Activated CD4-positive, alpha-beta T cell treated with anti-CD3 and anti-CD28 coated beads for 36 hours (primary cell): ENCODE measurements at regions of chr2 and their contacts with region 1.

Region 1: GRCh38 chr2:203014456-203015199 is at the start of gene NBEAL1:
- DNase-seq: peak; percentile 98
- ATAC-seq: peak; percentile 96
- H3K4me3 Mint-ChIP-seq: peak within 1 kb of the TSS; percentile 93
- H3K27ac Mint-ChIP-seq: peak within 1 kb of the TSS; percentile 89
- H3K4me1 Mint-ChIP-seq: peaks cover 32% of the 10 kb centered on the region
- H3K27me3 Mint-ChIP-seq: no peaks in the 10 kb centered on the region
- total RNA-seq, gene NBEAL1: 8.2 to 13.0 TPM

Region 2: DNA sequence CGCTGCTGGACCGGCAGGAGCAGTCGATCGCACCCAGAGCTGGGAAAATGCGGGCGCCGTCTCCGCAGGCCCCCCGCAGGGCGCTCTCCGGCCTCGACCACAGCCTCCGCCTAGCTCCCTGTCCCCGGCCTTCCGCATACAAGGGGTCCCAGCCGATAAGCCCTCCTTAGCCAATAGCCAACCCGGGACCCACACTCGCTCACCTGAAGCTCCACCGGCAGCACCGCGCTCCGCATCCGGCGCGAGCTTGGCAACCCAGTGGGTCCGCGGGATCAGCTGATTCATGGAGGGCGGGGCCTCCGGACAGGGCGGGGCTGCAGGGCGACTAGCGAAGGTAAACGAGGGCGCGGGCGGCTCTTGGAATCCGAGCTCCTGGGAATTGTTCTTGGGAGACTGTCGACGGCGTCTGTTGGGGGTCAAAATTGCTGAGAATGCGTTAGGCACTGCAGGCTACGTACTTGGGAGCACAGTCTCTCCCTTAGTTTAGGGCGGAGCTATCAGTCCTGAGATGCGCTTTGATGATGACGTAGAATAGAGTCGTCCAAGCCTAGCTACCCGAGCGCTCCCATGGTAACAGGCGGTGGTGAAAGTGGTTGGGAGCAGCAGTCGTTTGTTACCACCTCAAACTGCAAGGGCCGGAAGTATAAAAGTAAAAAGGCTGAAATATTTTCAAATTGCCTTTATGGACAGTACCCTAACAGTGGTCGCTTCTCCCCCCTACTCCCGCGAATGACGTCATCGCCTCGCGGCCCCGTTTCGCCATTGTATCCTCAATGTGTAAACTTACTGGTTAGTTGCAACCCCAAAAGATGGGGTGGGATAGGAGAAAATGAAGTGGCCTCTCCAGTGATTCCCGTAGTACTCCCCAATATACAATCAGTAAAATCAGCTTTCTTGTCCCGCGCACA is 1233.7 kb before region 1 on chr2 and contains the start of gene ALS2:
- CTCF ChIA-PET with region 1: no interaction called
- POLR2A ChIA-PET with region 1: no interaction called
- intact Hi-C with region 1: loop called in 1 of 2 experiments (anchors 2 kb)
- DNase-seq: peak; percentile 96
- ATAC-seq: peak; percentile 95
- H3K4me3 Mint-ChIP-seq: peak within 1 kb of the TSS; percentile 84
- H3K27ac Mint-ChIP-seq: peak within 1 kb of the TSS; percentile 92
- H3K4me1 Mint-ChIP-seq: peaks cover 25% of the 10 kb centered on the region
- H3K27me3 Mint-ChIP-seq: peaks cover 7% of the 10 kb centered on the region
- total RNA-seq, gene ALS2: 12.3 to 12.4 TPM

Region 3: DNA sequence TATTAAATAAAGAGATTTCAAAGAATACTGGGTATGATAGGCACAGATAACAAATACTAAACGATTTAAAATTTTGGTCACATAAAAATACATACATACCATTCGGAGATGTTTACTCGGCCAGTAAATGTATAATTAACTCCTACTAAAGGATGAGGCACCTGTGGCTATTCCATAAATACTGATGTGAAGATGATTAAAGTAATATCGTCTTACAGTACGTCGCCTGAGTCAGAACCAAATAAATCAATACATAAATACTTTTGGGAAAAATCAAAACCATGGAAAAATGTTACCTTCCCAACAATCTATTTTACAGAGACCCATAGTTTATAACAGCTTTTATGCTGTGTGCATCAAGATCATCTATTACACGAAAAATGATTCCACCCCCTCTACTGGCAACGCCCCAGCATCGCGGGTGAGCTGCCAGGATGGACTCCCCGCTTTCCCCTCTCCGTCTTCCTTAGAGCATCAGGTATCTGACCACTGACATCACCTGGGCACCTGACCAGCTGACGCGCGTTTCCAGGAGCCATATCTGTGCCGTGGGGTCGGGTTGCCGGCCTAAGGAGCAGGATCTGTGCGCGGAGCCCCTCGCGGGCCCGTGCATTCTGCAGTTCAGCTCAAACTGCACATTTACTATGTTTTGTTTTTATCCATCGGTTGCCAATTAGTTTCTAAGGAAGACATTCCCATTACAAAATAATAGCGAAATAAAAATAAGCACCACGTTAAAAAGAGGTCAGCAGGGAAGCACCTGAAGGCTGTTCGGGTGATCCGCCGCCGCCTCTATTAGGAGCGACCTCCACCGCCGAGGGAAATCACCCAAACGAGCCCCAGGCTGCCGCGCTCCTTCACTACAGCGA is 144.0 kb before region 1 on chr2:
- CTCF ChIA-PET with region 1: interaction called, 4 read pairs
- POLR2A ChIA-PET with region 1: no interaction called
- intact Hi-C with region 1: loop called in 1 of 2 experiments (anchors 1 kb)
- DNase-seq: peak; percentile 83
- ATAC-seq: peak; percentile 78
- H3K4me3 Mint-ChIP-seq: peak overlapping the region; percentile 90
- H3K27ac Mint-ChIP-seq: peak overlapping the region; percentile 80
- H3K4me1 Mint-ChIP-seq: peaks cover 11% of the 10 kb centered on the region
- H3K27me3 Mint-ChIP-seq: no peaks in the 10 kb centered on the region

Region 4: DNA sequence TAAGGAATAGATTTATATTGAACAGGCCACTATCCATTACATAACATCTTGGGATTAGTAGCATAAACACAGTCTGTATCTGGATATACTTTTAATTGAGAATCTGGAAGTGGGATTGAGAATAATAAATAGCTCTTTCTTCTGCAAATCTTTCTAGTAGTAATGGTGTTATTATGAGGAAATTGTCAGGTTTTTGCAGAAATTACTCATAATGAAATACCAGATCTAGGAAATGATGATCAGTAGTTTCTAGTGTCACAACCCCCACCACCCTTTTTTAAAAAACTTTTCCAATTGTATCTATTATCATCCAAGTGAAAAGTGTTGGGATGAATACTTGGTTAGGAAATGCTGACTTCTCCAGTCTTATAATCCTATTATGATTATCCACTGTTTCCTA is 18.8 kb after region 1 on chr2:
- CTCF ChIA-PET with region 1: no interaction called
- POLR2A ChIA-PET with region 1: no interaction called
- intact Hi-C with region 1: no loop called
- DNase-seq: no peak
- ATAC-seq: no peak
- H3K4me3 Mint-ChIP-seq: no peak overlapping the region
- H3K27ac Mint-ChIP-seq: no peak overlapping the region
- H3K4me1 Mint-ChIP-seq: peaks cover 18% of the 10 kb centered on the region
- H3K27me3 Mint-ChIP-seq: no peaks in the 10 kb centered on the region

Region 5: GRCh38 chr2:203112342-203112741 is 97.7 kb after region 1 on chr2:
- CTCF ChIA-PET with region 1: no interaction called
- POLR2A ChIA-PET with region 1: no interaction called
- intact Hi-C with region 1: no loop called
- DNase-seq: no peak
- ATAC-seq: no peak
- H3K4me3 Mint-ChIP-seq: no peak overlapping the region
- H3K27ac Mint-ChIP-seq: no peak overlapping the region
- H3K4me1 Mint-ChIP-seq: no peaks in the 10 kb centered on the region
- H3K27me3 Mint-ChIP-seq: no peaks in the 10 kb centered on the region

Region 6: GRCh38 chr2:203238704-203239526 is 224.3 kb after region 1 on chr2 and contains the start of gene CYP20A1:
- CTCF ChIA-PET with region 1: no interaction called
- POLR2A ChIA-PET with region 1: interaction called, 3 read pairs
- intact Hi-C with region 1: loop called (anchors 1 kb)
- DNase-seq: peak; percentile 99
- ATAC-seq: peak; percentile 84
- H3K4me3 Mint-ChIP-seq: peak within 1 kb of the TSS; percentile 93
- H3K27ac Mint-ChIP-seq: peak within 1 kb of the TSS; percentile 100
- H3K4me1 Mint-ChIP-seq: peaks cover 30% of the 10 kb centered on the region
- H3K27me3 Mint-ChIP-seq: no peaks in the 10 kb centered on the region
- total RNA-seq, gene CYP20A1: 19.0 to 23.3 TPM